Naive thymus-derived CD4-positive, alpha-beta T cell (primary cell): ENCODE measurements at regions of chr7 and their contacts with region 1.

Region 1: DNA sequence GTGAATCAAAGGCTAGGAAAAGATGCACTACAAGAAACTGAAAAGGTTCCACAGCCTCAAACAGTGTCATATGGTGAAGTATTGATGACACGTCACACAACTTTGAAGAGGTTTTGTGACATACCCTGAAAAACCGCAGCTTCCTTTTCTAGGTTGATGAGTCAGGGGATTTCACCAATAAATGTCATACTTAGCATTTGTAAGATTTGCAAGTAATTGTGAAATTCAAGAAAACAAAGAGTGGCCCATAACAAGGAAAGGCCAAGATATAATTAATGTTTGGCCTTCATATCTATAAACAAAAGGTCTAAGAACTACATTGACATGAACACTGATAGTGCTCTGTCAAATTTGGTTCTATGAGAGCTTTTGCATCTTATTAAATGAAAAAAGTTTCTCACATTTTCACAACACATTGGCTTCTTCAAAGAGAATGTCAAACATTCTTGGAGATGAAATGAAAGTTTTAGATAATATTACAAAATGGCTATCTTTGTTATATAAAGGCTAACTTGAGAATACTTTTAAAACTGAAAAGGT is 62.0 kb upstream of the NAMPT start:
- DNase-seq: peak in 8 of 9 donors; percentile 28 to 61 (median 50)
- ATAC-seq: peak; percentile 78
- H3K4me3 ChIP-seq: no peak overlapping the region
- H3K4me3 Mint-ChIP-seq: peak overlapping the region in 1 of 10 donors; percentile 47
- H3K27ac ChIP-seq: no peak overlapping the region
- H3K27ac Mint-ChIP-seq: peak overlapping the region in 2 of 9 donors; percentile 19 to 94
- H3K4me1 ChIP-seq: peaks cover 6 to 19% of the 10 kb centered on the region in 2 donors
- H3K4me1 Mint-ChIP-seq: peaks cover 5 to 35% (median 13%) of the 10 kb centered on the region in 7 donors
- H3K27me3 ChIP-seq: no peaks in the 10 kb centered on the region
- H3K27me3 Mint-ChIP-seq: peaks cover 1 to 61% (median 31%) of the 10 kb centered on the region in 5 donors

Region 2: DNA sequence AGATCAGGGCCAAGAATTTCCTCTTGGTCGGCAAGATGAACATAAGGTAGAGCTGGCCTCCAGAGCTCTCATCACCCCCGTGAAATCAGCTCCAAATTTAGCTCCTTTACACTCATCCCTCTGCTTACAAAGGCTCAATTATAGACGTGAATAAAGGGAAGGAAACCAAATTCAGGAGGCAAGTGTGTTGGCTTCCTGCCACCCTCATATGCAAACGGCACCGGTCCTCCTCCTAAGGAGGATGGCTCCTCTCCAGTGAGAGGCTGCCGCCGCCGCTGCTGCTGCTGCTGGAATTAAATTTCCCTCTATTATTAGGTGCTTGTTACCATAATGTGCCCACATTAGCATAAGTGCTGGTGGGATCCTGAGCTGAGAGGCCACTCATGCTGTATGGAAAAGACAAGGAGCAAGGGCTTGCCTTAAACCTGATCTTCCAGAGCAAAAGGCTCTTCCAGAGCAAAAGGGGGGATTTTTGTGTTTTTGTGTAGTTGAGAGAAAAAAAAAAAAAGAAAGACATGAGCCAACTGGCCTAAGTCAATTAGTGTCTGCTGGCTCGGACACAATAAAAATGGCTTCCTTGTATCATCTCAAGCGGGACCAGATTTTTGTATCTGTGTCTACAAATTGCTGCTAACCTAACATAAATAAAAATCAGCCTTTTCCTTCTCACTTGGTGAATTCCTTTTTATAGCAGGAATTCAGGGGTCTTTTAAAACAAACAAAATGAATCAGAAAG is 315.3 kb before region 1 on chr7:
- CTCF ChIA-PET with region 1: no interaction called
- POLR2A ChIA-PET with region 1: no interaction called
- intact Hi-C with region 1: no loop called
- DNase-seq: peak in 5 of 9 donors; percentile 21 to 48 (median 40)
- ATAC-seq: peak; percentile 46
- H3K4me3 ChIP-seq: no peak overlapping the region
- H3K4me3 Mint-ChIP-seq: peak overlapping the region in 8 of 10 donors; percentile 10 to 68 (median 50)
- H3K27ac ChIP-seq: no peak overlapping the region
- H3K27ac Mint-ChIP-seq: peak overlapping the region in 7 of 9 donors; percentile 34 to 82 (median 71)
- H3K4me1 ChIP-seq: peaks cover 0 to 18% of the 10 kb centered on the region in 2 donors
- H3K4me1 Mint-ChIP-seq: peaks cover 6 to 65% (median 42%) of the 10 kb centered on the region in 7 donors
- H3K27me3 ChIP-seq: no peaks in the 10 kb centered on the region
- H3K27me3 Mint-ChIP-seq: peaks cover 0 to 39% (median 0%) of the 10 kb centered on the region in 5 donors

Region 3: GRCh38 chr7:106273009-106273668 is 73.6 kb before region 1 on chr7:
- CTCF ChIA-PET with region 1: no interaction called
- POLR2A ChIA-PET with region 1: no interaction called
- intact Hi-C with region 1: no loop called
- DNase-seq: no peak
- ATAC-seq: peak; percentile 6
- H3K4me3 ChIP-seq: no peak overlapping the region
- H3K4me3 Mint-ChIP-seq: no peak overlapping the region
- H3K27ac ChIP-seq: no peak overlapping the region
- H3K27ac Mint-ChIP-seq: no peak overlapping the region
- H3K4me1 ChIP-seq: no peaks in the 10 kb centered on the region
- H3K4me1 Mint-ChIP-seq: peaks cover 0 to 17% (median 3%) of the 10 kb centered on the region in 7 donors
- H3K27me3 ChIP-seq: no peaks in the 10 kb centered on the region
- H3K27me3 Mint-ChIP-seq: no peaks in the 10 kb centered on the region

Region 4: DNA sequence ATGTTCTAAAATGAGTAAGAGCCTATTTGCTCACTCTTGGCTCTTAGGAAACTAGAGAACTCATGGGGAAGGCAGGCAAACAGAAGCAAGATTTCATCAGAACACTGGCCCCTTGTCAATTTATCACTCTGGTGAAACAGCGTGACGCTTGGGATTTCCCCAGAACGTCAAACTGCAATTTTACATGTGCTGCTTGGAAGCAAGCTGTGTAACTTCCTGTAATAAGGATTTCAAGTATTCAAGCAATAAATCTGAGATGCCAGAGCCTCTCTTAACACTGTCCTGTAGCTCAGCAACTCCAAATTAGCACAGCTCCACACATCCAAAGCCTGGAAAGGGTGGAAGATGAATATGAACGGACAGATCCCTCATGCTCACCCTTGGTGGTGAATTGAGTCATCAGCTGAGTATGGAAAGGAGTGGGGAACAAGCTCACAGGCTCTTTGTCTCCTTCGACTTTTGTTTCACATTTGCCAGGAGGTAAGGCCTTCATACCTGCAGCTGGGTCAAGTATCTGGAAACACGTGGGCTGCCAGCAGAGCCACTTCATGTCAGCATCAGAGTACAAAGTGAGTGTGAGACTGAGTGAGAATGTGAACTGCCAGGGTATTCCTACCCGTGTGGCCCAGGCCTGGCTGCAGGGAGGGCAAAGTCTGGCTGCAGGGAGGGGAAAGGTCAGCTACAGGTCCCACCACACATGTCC is 78.4 kb after region 1 on chr7:
- CTCF ChIA-PET with region 1: no interaction called
- POLR2A ChIA-PET with region 1: no interaction called
- intact Hi-C with region 1: loop called in 1 of 2 experiments (anchors 1 kb)
- DNase-seq: peak in 2 of 9 donors; percentile 5 to 64
- ATAC-seq: peak; percentile 78
- H3K4me3 ChIP-seq: no peak overlapping the region
- H3K4me3 Mint-ChIP-seq: peak overlapping the region in 1 of 10 donors; percentile 58
- H3K27ac ChIP-seq: no peak overlapping the region
- H3K27ac Mint-ChIP-seq: peak overlapping the region in 1 of 9 donors; percentile 87
- H3K4me1 ChIP-seq: no peaks in the 10 kb centered on the region
- H3K4me1 Mint-ChIP-seq: peaks cover 0 to 28% (median 6%) of the 10 kb centered on the region in 7 donors
- H3K27me3 ChIP-seq: no peaks in the 10 kb centered on the region
- H3K27me3 Mint-ChIP-seq: peaks cover 0 to 36% (median 13%) of the 10 kb centered on the region in 5 donors

Region 5: DNA sequence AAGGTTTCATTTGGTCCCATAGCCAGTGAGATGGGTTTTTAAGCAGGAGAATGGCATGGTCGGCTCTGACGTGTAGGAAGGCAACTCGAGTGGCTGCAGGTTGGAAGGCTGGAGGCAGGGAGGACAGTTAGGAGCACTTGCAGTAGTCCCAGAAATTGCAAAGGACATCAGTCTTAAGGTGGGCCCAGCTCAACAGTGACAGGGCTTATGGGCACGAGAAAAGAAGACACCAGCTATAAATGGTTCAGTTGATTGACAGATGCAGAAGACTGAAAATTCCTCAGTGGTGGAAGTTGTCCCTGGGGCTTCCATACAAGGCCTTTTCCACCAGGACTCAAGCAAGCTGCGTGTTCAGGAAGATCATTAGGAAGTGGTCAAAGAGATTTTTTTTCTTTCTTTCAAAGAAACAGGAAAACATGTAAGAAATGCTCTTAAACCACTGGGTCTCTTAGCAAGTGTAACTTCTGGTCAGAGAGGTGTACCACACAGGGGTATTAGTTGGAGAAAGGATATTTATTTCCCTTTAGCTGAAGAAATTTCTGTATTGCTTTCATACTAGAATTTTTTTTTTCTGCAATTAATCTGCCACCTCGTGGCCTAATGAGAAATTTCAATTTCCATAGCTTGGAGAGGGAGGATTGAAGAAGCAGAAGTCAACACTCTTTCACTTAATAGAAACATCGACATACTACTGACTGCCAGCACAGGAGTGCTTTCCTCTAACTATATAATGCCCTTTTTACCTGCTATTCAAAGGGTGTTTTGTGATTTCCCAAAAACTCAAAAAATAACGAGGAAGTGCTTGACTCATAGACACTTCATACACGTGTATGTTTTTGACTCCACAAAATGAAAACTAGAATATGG is 115.5 kb after region 1 on chr7:
- CTCF ChIA-PET with region 1: no interaction called
- POLR2A ChIA-PET with region 1: no interaction called
- intact Hi-C with region 1: loop called in 1 of 2 experiments (anchors 2 kb)
- DNase-seq: peak in 5 of 9 donors; percentile 11 to 32 (median 14)
- ATAC-seq: peak; percentile 51
- H3K4me3 ChIP-seq: no peak overlapping the region
- H3K4me3 Mint-ChIP-seq: no peak overlapping the region
- H3K27ac ChIP-seq: no peak overlapping the region
- H3K27ac Mint-ChIP-seq: peak overlapping the region in 1 of 9 donors; percentile 14
- H3K4me1 ChIP-seq: no peaks in the 10 kb centered on the region
- H3K4me1 Mint-ChIP-seq: peaks cover 0 to 14% (median 0%) of the 10 kb centered on the region in 7 donors
- H3K27me3 ChIP-seq: no peaks in the 10 kb centered on the region
- H3K27me3 Mint-ChIP-seq: no peaks in the 10 kb centered on the region

Region 6: DNA sequence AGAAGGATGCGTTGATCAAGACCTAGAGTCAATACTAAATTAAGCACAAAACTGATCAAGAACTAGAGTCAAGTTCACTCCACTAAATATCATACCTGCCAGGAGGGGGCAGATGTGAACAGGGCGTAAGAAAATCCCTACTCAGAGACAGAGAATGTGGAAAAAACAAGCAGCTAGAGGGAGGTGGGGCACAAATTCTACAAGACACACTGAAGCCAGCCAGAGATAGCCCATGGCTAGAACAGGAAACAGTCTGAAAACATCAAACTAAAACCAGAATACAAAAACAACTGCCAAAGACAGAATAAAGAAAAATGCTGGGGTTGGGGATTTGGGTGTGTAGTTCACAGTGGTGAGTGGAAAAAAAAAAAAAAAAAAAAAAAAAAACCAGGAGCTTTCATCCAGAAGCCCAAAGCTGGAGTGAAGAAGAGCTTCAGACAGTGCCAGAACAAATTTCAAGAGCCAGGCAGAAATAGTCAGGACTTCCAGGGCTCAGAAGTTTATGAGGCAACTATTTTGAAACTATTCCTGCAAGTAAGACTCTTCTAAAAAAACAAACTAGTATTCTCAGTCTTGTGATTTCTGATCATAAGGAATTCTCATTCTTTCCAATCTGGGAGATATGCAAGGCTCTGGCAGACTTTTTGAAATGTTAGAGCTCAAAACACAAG is 195.9 kb after region 1 on chr7:
- CTCF ChIA-PET with region 1: no interaction called
- POLR2A ChIA-PET with region 1: no interaction called
- intact Hi-C with region 1: no loop called
- DNase-seq: peak in 6 of 9 donors; percentile 14 to 35 (median 26)
- ATAC-seq: peak; percentile 81
- H3K4me3 ChIP-seq: no peak overlapping the region
- H3K4me3 Mint-ChIP-seq: no peak overlapping the region
- H3K27ac ChIP-seq: no peak overlapping the region
- H3K27ac Mint-ChIP-seq: peak overlapping the region in 4 of 9 donors; percentile 4 to 30 (median 12)
- H3K4me1 ChIP-seq: no peaks in the 10 kb centered on the region
- H3K4me1 Mint-ChIP-seq: peaks cover 0 to 10% (median 6%) of the 10 kb centered on the region in 7 donors
- H3K27me3 ChIP-seq: no peaks in the 10 kb centered on the region
- H3K27me3 Mint-ChIP-seq: peaks cover 0 to 6% (median 0%) of the 10 kb centered on the region in 5 donors